ENCODE measurements at regions of chr9 and their contacts with region 1.

Region 1: DNA sequence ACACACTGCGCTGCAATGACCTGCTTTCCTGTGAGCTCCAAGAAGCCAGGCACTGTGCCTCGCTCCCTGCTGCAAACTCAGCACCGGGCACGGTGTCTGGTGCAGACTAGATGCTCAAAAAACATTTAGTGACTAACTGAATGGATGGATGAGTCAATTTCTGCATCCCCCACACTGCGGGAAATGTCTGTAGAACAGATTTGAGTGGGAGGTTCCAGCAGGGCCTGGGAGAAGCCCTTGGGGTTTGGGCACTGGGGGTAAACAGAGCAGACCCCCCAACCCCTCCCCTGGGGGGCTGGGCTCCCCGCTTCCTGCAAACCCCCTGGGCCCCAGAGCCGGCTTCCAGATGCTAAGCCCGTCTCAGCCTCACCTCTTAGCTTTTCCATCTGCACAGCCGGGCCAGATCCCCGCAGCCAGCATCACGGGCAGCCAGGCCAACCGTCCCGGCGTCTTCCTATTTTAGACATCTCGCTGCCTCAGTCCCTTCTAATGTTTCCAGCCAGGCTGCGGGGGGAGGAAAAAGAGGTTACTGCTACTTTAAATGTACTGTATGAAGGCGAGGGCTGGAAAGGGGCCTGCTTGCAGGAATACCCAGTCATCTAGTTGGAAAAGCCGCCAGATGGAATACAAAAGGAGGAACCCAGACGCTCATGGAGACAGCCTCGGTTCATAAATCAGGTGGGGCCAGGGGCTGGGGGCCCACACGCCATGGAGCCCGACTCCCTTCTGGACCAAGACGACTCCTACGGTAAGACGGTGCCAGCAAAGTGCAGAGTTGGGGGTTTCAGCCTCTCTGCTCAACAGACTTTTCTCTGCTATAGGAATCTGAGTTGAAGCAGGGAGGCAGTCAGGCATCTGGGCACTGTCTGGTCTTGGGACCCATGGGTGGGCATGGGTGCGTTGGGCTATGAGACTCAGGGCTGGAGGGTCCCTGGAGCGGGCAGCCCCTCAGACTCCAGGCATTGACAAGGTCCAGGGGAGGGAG is 67.1 kb upstream of the GGTA1 start:
- DNase-seq: peak; percentile 65 to 79 (median 77)
- ATAC-seq: peak; percentile 36 to 74 (median 60)
- H3K4me3 ChIP-seq: peak overlapping the region; percentile 5 to 61 (median 46)
- H3K27ac ChIP-seq: peak overlapping the region; percentile 69 to 94 (median 84)
- H3K4me1 ChIP-seq: peaks cover 14 to 39% (median 34%) of the 10 kb centered on the region in 12 donors
- H3K27me3 ChIP-seq: no peaks in the 10 kb centered on the region
- CTCF ChIP-seq: no peak
- POLR2A ChIP-seq: no peak

Region 2: GRCh38 chr9:121478816-121479676 is 87.7 kb before region 1 on chr9:
- intact Hi-C with region 1: no loop called
- DNase-seq: no peak
- ATAC-seq: peak; percentile 29 to 63 (median 40)
- H3K4me3 ChIP-seq: no peak overlapping the region
- H3K27ac ChIP-seq: peak overlapping the region in 11 of 12 donors; percentile 20 to 66 (median 48)
- H3K4me1 ChIP-seq: peaks cover 0 to 69% (median 51%) of the 10 kb centered on the region in 12 donors
- H3K27me3 ChIP-seq: no peaks in the 10 kb centered on the region
- CTCF ChIP-seq: no peak
- POLR2A ChIP-seq: no peak

Region 3: DNA sequence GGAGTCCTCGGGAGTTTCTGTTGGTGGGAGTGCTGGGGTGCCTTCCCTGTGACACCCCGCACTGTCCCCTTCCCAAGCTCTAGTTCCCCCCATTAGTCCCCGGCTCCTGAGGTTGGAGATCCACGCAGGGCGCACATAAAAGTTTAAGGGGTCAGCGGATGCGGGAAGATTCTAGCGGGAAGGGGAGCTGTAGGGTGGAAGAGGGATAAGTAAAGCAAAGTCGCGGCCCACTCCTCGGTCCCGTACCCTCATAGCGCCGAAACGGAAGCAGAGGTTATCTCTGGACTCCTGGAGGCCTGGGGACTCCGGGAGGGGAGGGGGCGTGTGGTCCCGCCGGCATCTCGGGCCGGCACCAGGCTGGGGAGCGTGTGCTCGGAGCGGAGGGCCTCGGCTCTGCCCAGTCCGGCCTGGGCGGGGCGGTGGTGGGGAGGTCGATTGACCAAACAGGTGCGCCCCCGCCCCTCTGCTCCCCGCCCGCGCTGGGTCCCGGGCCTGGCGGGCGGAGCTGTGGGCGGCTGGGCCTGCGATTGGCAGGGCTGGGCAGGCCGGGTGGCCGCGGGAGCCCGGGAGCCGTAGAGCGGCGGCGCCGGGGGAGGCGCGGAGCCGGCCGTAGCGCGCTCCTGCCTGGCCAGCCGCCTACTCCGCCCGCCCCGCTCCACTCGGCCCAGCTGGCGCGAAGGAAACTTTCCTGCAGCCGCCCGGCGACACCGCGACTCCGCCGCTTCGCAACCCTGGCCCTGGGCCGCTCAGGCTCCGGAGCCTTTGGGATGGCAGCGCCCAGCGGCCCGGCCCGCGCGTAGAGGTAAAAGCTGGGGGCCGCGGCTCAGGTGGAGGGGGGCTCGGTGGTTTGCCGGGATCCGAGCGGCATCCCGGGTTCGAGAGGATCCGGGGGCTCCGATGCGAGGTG is 32.4 kb after region 1 on chr9:
- intact Hi-C with region 1: loop called in 4 of 10 experiments (anchors 2 to 5 kb)
- DNase-seq: peak; percentile 82 to 88 (median 83)
- ATAC-seq: peak; percentile 70 to 88 (median 83)
- H3K4me3 ChIP-seq: peak overlapping the region; percentile 57 to 78 (median 71)
- H3K27ac ChIP-seq: peak overlapping the region; percentile 79 to 98 (median 95)
- H3K4me1 ChIP-seq: peaks cover 4 to 51% (median 37%) of the 10 kb centered on the region in 12 donors
- H3K27me3 ChIP-seq: peaks cover 0 to 29% (median 0%) of the 10 kb centered on the region in 9 donors
- CTCF ChIP-seq: peak in 1 of 12 donors; percentile 13
- POLR2A ChIP-seq: peak; percentile 2 to 68

Region 4: GRCh38 chr9:121604242-121604641 is 37.5 kb after region 1 on chr9:
- intact Hi-C with region 1: loop called in 4 of 10 experiments (anchors 2 to 5 kb)
- DNase-seq: peak in 2 of 5 donors; percentile 44 to 55
- ATAC-seq: peak in 1 of 4 donors; percentile 35
- H3K4me3 ChIP-seq: no peak overlapping the region
- H3K27ac ChIP-seq: peak overlapping the region in 11 of 12 donors; percentile 18 to 75 (median 61)
- H3K4me1 ChIP-seq: peaks cover 24 to 83% (median 69%) of the 10 kb centered on the region in 12 donors
- H3K27me3 ChIP-seq: peaks cover 0 to 13% (median 0%) of the 10 kb centered on the region in 9 donors
- CTCF ChIP-seq: no peak
- POLR2A ChIP-seq: no peak

Region 5: GRCh38 chr9:121621113-121621449 is 54.3 kb after region 1 on chr9:
- intact Hi-C with region 1: loop called in 1 of 10 experiments (anchors 5 kb)
- DNase-seq: peak in 1 of 5 donors; percentile 26
- ATAC-seq: peak in 1 of 4 donors; percentile 6
- H3K4me3 ChIP-seq: no peak overlapping the region
- H3K27ac ChIP-seq: peak overlapping the region in 9 of 12 donors; percentile 13 to 84 (median 77)
- H3K4me1 ChIP-seq: peaks cover 3 to 78% (median 46%) of the 10 kb centered on the region in 12 donors
- H3K27me3 ChIP-seq: no peaks in the 10 kb centered on the region
- CTCF ChIP-seq: peak in 11 of 12 donors; percentile 13 to 62 (median 39)
- POLR2A ChIP-seq: no peak

Region 6: DNA sequence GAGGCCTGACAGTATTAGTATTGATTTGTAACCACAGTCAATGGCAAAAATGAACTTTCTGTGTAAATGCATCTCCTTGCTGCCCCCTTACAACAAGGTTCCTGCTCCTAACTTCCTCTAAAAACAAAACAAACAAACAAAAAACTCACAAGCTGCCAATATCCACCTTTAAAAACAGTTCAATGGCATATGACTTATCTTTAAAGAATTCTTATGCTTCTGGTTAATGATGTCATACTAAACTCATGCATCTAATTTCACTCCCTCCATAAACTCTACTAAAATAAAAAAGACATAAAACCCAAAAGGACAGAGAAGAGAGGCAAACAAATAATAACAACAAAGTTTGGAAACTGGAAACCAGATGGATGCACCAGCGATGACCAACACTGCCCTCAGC is 969.4 kb after region 1 on chr9:
- intact Hi-C with region 1: no loop called
- DNase-seq: no peak
- ATAC-seq: no peak
- H3K4me3 ChIP-seq: no peak overlapping the region
- H3K27ac ChIP-seq: no peak overlapping the region
- H3K4me1 ChIP-seq: no peaks in the 10 kb centered on the region
- H3K27me3 ChIP-seq: no peaks in the 10 kb centered on the region
- CTCF ChIP-seq: no peak
- POLR2A ChIP-seq: no peak

Measured in heart left ventricle (tissue), 16 donors.